ENCODE measurements at regions of chr11 and their contacts with region 1.

Region 1: DNA sequence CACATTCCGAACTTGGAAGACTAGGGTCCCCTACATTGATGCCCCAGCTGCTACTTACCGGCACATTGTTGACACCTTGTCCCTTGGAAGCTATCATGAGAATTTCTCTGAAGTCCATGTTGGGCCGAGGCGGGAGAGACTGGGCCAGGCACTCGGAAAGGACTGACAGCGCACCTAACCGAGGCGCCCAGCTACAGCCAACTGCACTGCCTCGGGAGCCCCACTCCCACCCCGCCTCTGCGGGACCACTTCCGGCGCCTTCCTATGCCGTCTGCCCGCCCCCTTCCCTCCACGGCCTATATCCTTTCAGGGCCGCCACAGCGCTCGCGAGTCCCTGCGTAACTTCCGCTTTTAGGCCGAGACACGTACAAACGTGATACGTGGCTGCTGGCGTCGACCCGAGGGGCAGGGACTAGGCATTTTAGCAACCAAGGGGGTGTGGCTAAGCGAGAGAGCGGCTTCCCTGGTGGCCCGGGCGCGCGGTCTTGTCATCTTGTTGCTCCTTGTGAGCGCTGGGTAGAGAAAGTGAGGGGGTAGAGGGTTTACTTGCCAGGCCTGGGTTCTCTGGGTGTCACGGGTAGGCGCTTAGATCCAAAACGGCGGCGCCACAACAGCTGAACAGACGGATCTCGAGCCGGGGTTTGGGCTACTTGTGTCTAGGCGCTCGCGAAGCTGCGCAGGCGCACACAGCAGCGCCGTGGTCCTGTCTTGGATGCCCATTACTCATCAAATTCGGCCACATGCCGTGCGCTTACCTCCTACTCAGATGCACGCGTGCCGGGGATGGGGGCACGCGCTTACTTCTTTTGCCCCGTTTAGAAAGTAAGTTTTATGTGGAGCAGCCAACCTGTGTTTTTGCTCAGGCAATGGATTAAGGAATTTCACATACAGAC is at the start of gene SPTY2D1:
- DNase-seq: peak; percentile 99
- H3K4me3 Mint-ChIP-seq: peak within 1 kb of the TSS; percentile 91
- H3K27ac Mint-ChIP-seq: peak within 1 kb of the TSS; percentile 99
- H3K4me1 Mint-ChIP-seq: peaks cover 14% of the 10 kb centered on the region
- H3K27me3 Mint-ChIP-seq: no peaks in the 10 kb centered on the region
- CTCF ChIP-seq: no peak
- total RNA-seq, gene SPTY2D1: 26.8 and 30.2 TPM in 2 replicates

Region 2: GRCh38 chr11:18540207-18541009 is 94.0 kb before region 1 on chr11:
- CTCF ChIA-PET with region 1: interaction called, 4 read pairs
- POLR2A ChIA-PET with region 1: interaction called, 6 read pairs
- intact Hi-C with region 1: loop called (anchors 10 kb)
- DNase-seq: peak; percentile 35
- H3K4me3 Mint-ChIP-seq: no peak overlapping the region
- H3K27ac Mint-ChIP-seq: no peak overlapping the region
- H3K4me1 Mint-ChIP-seq: no peaks in the 10 kb centered on the region
- H3K27me3 Mint-ChIP-seq: no peaks in the 10 kb centered on the region
- CTCF ChIP-seq: peak; percentile 46

Region 3: GRCh38 chr11:18588297-18589252 is 45.8 kb before region 1 on chr11 and contains the start of gene UEVLD:
- CTCF ChIA-PET with region 1: interaction called, 3 read pairs
- POLR2A ChIA-PET with region 1: interaction called, 64 read pairs
- intact Hi-C with region 1: loop called (anchors 1 kb)
- DNase-seq: peak; percentile 87
- H3K4me3 Mint-ChIP-seq: no peak within 1 kb of the TSS
- H3K27ac Mint-ChIP-seq: no peak within 1 kb of the TSS
- H3K4me1 Mint-ChIP-seq: no peaks in the 10 kb centered on the region
- H3K27me3 Mint-ChIP-seq: no peaks in the 10 kb centered on the region
- CTCF ChIP-seq: no peak
- total RNA-seq, gene UEVLD: 22.8 and 24.8 TPM in 2 replicates

Region 4: DNA sequence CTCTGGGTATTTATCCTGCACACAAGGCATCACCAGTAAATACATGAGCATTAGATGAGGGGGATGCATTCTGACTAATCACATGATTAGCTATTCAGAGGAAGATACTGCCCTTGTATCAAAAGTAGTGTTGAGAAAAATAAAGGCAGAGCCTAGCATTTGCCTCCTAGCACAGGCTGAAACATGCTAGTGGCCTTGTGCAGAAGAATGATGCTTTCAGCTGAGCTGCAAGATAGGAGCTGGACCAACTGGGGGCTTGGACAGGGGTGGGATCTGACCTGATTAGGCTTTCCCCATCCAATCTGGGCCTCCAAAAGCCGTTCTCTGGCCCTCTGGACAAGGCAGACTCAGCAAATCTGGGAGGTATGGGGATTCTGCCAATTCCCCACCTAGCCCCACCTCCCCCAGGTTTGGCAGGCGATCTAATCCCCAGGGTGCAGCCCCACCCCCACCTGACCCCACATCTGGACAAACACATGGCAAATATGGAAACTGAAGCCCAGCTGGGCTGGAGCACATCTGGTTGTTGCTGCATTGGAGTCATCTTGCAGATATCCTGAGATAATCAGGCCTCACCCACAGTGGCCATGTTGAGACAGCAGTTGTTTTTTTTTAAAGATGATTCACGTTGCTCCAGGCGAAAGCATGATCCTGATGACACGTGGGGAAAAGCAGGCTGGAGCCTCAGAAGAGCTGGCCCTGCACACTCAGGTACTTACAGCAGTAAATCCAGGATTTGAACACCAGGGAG is 39.2 kb before region 1 on chr11:
- CTCF ChIA-PET with region 1: interaction called, 4 read pairs
- POLR2A ChIA-PET with region 1: interaction called, 64 read pairs
- intact Hi-C with region 1: no loop called
- DNase-seq: peak; percentile 23
- H3K4me3 Mint-ChIP-seq: no peak overlapping the region
- H3K27ac Mint-ChIP-seq: peak overlapping the region; percentile 23
- H3K4me1 Mint-ChIP-seq: peaks cover 12% of the 10 kb centered on the region
- H3K27me3 Mint-ChIP-seq: no peaks in the 10 kb centered on the region
- CTCF ChIP-seq: no peak

Region 5: DNA sequence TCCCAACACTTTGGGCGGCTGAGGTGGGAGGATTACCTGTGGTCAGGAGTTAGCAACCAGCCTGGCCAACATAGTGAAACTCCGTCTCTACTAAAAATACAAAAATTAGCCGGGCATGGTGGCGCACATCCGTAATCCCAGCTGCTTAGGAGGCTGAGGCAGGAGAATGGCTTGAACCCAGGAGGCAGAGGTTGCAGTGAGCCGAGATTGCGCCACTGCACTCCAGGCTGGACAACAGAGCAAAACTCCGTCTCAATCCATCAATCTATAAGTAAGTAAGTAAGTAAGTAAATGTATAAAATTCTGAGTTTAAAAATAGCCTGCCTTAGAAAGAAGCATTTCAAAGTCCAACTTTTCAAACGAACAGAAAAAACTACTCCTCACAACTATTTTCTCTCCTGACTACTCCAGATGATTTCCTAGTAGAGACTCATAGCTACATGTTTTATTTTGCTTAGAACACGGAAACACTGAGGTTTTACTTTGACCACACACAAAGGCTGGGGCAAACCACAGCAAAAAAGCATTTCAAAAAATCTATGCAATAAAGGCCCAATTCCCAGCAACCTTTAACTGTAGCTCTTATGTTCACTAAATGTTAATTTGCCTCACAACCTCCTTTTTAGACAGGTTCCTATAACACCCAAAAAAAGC is 16.6 kb before region 1 on chr11:
- CTCF ChIA-PET with region 1: interaction called, 3 read pairs
- POLR2A ChIA-PET with region 1: interaction called, 31 read pairs
- intact Hi-C with region 1: no loop called
- DNase-seq: no peak
- H3K4me3 Mint-ChIP-seq: no peak overlapping the region
- H3K27ac Mint-ChIP-seq: peak overlapping the region; percentile 33
- H3K4me1 Mint-ChIP-seq: peaks cover 15% of the 10 kb centered on the region
- H3K27me3 Mint-ChIP-seq: no peaks in the 10 kb centered on the region
- CTCF ChIP-seq: no peak

Region 6: DNA sequence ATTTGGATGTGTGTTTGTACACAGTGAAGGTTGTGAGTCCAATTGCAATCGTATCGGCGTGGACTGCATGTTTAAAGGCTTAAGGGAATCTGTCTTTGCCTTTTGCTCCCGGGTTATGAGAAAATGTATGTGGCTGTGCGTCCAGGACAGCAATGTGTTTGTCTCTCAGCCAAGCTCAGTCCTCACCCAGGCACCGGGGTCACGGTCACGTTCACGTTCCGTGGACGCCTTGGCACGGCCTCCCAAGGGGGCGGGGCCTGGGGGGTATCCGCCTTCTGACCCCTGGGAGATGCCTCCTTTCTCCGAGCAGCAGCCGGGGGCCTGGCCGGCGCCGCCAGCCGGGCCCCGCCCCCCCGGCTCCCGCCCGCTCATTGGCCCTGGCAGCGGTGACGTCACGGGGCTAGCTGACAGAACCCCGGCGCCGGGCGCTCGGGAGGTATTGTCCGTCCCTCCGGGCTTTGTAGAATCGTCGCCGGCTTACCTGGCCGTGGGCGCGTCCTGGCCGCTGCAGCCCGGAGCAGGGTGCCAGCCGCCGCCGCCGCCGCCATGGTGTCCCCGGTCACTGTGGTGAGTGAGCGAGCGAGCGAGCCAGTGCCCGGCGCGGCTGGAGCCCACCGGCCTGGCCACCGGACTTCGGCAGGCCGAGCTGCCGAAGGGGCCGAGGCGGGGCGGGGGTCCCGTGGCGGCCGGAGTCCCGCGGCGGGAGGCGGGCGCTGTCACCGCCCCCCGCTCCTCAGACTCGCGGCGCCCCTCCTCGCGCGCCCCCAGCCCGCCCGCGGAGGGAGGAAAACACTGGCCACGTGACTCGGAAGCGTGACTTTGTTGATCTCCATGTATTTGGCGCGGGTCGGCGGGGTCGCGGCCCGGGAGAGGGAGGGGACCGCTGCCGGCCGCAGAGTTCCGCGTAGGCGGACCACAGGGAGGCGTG is 64.2 kb after region 1 on chr11 and contains the start of gene TMEM86A:
- CTCF ChIA-PET with region 1: interaction called, 3 read pairs
- POLR2A ChIA-PET with region 1: interaction called, 10 read pairs
- intact Hi-C with region 1: no loop called
- DNase-seq: peak; percentile 78
- H3K4me3 Mint-ChIP-seq: peak within 1 kb of the TSS; percentile 69
- H3K27ac Mint-ChIP-seq: peak within 1 kb of the TSS; percentile 23
- H3K4me1 Mint-ChIP-seq: peaks cover 12% of the 10 kb centered on the region
- H3K27me3 Mint-ChIP-seq: peaks cover 17% of the 10 kb centered on the region
- CTCF ChIP-seq: no peak
- total RNA-seq, gene TMEM86A: 0.30 and 0.49 TPM in 2 replicates

Measured in MCF 10A (cell line).